Transverse colon (tissue), 4 donors: ENCODE measurements at regions of chr2 and their contacts with region 1.

Region 1: GRCh38 chr2:168956392-168956791 is 55.3 kb downstream of the G6PC2 start:
- DNase-seq: no peak
- H3K4me3 ChIP-seq: no peak overlapping the region
- H3K27ac ChIP-seq: no peak overlapping the region
- H3K4me1 ChIP-seq: no peaks in the 10 kb centered on the region
- H3K27me3 ChIP-seq: no peaks in the 10 kb centered on the region
- CTCF ChIP-seq: no peak
- EP300 ChIP-seq: no peak
- POLR2A ChIP-seq: no peak

Region 2: GRCh38 chr2:169131587-169132512 is 175.5 kb after region 1 on chr2:
- in situ Hi-C with region 1: loop called in 3 of 4 experiments (anchors 5 to 10 kb)
- intact Hi-C with region 1: no loop called
- DNase-seq: no peak
- H3K4me3 ChIP-seq: no peak overlapping the region
- H3K27ac ChIP-seq: no peak overlapping the region
- H3K4me1 ChIP-seq: no peaks in the 10 kb centered on the region
- H3K27me3 ChIP-seq: no peaks in the 10 kb centered on the region
- CTCF ChIP-seq: peak; percentile 79 to 90 (median 81)
- EP300 ChIP-seq: no peak
- POLR2A ChIP-seq: no peak